Naive thymus-derived CD4-positive, alpha-beta T cell (primary cell): ENCODE measurements at regions of chr14 and their contacts with region 1.

Region 1: GRCh38 chr14:61475316-61475715 is 153.9 kb downstream of the PRKCH start:
- DNase-seq: peak in 2 of 9 donors; percentile 32 to 34
- ATAC-seq: no peak
- H3K4me3 ChIP-seq: no peak overlapping the region
- H3K4me3 Mint-ChIP-seq: peak overlapping the region in 8 of 10 donors; percentile 28 to 94 (median 48)
- H3K27ac ChIP-seq: peak overlapping the region; percentile 98
- H3K27ac Mint-ChIP-seq: peak overlapping the region in 8 of 9 donors; percentile 84 to 100 (median 96)
- H3K4me1 ChIP-seq: peaks cover 93 to 95% of the 10 kb centered on the region in 2 donors
- H3K4me1 Mint-ChIP-seq: peaks cover 55 to 98% (median 95%) of the 10 kb centered on the region in 7 donors
- H3K27me3 ChIP-seq: no peaks in the 10 kb centered on the region
- H3K27me3 Mint-ChIP-seq: no peaks in the 10 kb centered on the region

Region 2: GRCh38 chr14:59739794-59740193 is 1735.5 kb before region 1 on chr14:
- CTCF ChIA-PET with region 1: no interaction called
- POLR2A ChIA-PET with region 1: no interaction called
- intact Hi-C with region 1: no loop called
- DNase-seq: no peak
- ATAC-seq: peak; percentile 24
- H3K4me3 ChIP-seq: no peak overlapping the region
- H3K4me3 Mint-ChIP-seq: no peak overlapping the region
- H3K27ac ChIP-seq: no peak overlapping the region
- H3K27ac Mint-ChIP-seq: no peak overlapping the region
- H3K4me1 ChIP-seq: no peaks in the 10 kb centered on the region
- H3K4me1 Mint-ChIP-seq: no peaks in the 10 kb centered on the region
- H3K27me3 ChIP-seq: no peaks in the 10 kb centered on the region
- H3K27me3 Mint-ChIP-seq: peaks cover 0 to 18% (median 4%) of the 10 kb centered on the region in 5 donors

Region 3: DNA sequence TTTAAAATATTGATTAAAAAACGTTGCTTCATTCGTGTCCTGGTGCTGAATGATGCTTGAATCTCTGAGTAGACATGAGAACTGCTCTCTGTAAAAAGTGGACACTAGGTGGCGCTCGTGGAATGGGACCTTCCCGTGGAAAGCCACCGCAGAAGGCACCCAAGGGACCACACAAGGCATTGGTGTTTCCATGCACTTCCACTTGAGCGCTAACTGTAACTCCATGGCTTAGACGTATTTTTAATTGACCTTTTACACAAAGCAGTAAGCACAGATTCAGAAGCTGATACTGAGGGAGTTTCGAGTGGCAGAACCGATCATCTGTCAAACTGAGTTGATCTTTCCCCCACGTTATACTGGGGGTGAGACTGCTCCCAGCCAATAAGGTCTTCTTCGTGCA is 18.6 kb before region 1 on chr14:
- CTCF ChIA-PET with region 1: interaction called, 12 read pairs
- POLR2A ChIA-PET with region 1: interaction called, 5 read pairs
- intact Hi-C with region 1: loop called (anchors 1 kb)
- DNase-seq: peak; percentile 63 to 82 (median 77)
- ATAC-seq: peak; percentile 76
- H3K4me3 ChIP-seq: no peak overlapping the region
- H3K4me3 Mint-ChIP-seq: peak overlapping the region in 5 of 10 donors; percentile 5 to 80 (median 51)
- H3K27ac ChIP-seq: peak overlapping the region; percentile 32
- H3K27ac Mint-ChIP-seq: peak overlapping the region in 8 of 9 donors; percentile 70 to 92 (median 86)
- H3K4me1 ChIP-seq: peaks cover 53 to 59% of the 10 kb centered on the region in 2 donors
- H3K4me1 Mint-ChIP-seq: peaks cover 52 to 93% (median 89%) of the 10 kb centered on the region in 7 donors
- H3K27me3 ChIP-seq: no peaks in the 10 kb centered on the region
- H3K27me3 Mint-ChIP-seq: no peaks in the 10 kb centered on the region

Region 4: GRCh38 chr14:61503167-61503801 is 28.0 kb after region 1 on chr14:
- CTCF ChIA-PET with region 1: interaction called, 10 read pairs
- POLR2A ChIA-PET with region 1: interaction called, 9 read pairs
- intact Hi-C with region 1: loop called (anchors 1 kb)
- DNase-seq: peak in 8 of 9 donors; percentile 57 to 83 (median 67)
- ATAC-seq: peak; percentile 91
- H3K4me3 ChIP-seq: peak overlapping the region; percentile 25
- H3K4me3 Mint-ChIP-seq: peak overlapping the region; percentile 58 to 88 (median 80)
- H3K27ac ChIP-seq: peak overlapping the region; percentile 78
- H3K27ac Mint-ChIP-seq: peak overlapping the region in 6 of 9 donors; percentile 92 to 99 (median 97)
- H3K4me1 ChIP-seq: peaks cover 56 to 85% of the 10 kb centered on the region in 2 donors
- H3K4me1 Mint-ChIP-seq: peaks cover 78 to 100% (median 93%) of the 10 kb centered on the region in 7 donors
- H3K27me3 ChIP-seq: no peaks in the 10 kb centered on the region
- H3K27me3 Mint-ChIP-seq: no peaks in the 10 kb centered on the region

Region 5: DNA sequence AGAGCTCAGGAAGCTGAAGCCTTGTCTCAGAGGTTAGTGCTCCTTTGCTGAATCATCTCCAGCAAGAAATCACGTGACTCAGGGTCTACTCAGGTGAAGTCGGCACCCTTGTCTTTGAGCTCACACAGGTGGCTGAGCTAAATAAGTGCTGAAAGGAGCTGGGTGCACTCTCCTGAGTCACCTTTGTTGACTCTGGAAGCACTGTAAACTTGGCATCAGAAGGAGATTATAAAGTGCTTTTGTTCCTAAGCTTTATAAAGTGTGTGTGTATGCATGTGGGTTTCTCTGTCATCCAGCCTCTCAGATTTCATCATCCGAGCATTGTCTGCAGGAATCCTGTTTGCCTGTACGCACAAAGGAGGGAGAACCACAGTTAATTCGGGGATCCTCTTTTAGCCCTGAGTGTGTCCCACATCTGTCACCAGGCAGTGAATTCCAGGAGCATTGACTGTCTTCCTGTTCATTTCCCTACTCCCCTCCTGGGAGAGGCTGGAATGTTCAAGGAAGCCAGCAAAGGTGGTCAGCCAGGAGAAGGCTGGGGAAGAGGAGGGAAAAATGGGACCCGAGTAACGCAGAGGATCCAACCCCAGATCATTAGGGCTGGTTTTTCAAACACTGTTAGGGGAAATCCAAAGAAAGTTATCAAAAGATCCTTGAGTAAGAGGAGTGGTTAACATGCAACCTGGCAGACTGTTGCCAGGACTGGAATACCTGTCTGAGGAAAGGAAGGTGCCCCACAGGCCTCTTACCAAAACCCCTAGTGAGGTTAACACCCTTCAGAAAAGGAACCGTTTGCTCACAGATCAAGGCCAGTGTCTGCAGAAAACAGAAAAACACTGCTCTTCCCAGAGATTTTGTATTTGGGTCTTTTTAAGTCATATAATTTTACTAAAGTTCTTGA is 62.5 kb after region 1 on chr14:
- CTCF ChIA-PET with region 1: interaction called, 4 read pairs
- POLR2A ChIA-PET with region 1: interaction called, 3 read pairs
- intact Hi-C with region 1: loop called in 1 of 2 experiments (anchors 2 kb)
- DNase-seq: peak in 1 of 9 donors; percentile 29
- ATAC-seq: peak; percentile 24
- H3K4me3 ChIP-seq: no peak overlapping the region
- H3K4me3 Mint-ChIP-seq: peak overlapping the region in 1 of 10 donors; percentile 26
- H3K27ac ChIP-seq: peak overlapping the region; percentile 24
- H3K27ac Mint-ChIP-seq: peak overlapping the region; percentile 38 to 85 (median 66)
- H3K4me1 ChIP-seq: no peaks in the 10 kb centered on the region
- H3K4me1 Mint-ChIP-seq: peaks cover 15 to 74% (median 35%) of the 10 kb centered on the region in 7 donors
- H3K27me3 ChIP-seq: no peaks in the 10 kb centered on the region
- H3K27me3 Mint-ChIP-seq: no peaks in the 10 kb centered on the region

Region 6: GRCh38 chr14:61662437-61663311 is 187.4 kb after region 1 on chr14:
- CTCF ChIA-PET with region 1: no interaction called
- POLR2A ChIA-PET with region 1: interaction called, 9 read pairs
- intact Hi-C with region 1: loop called (anchors 1 to 2 kb)
- DNase-seq: peak in 8 of 9 donors; percentile 23 to 56 (median 46)
- ATAC-seq: peak; percentile 91
- H3K4me3 ChIP-seq: peak overlapping the region; percentile 26
- H3K4me3 Mint-ChIP-seq: peak overlapping the region; percentile 49 to 91 (median 79)
- H3K27ac ChIP-seq: peak overlapping the region; percentile 54
- H3K27ac Mint-ChIP-seq: peak overlapping the region; percentile 70 to 96 (median 89)
- H3K4me1 ChIP-seq: peaks cover 40 to 65% of the 10 kb centered on the region in 2 donors
- H3K4me1 Mint-ChIP-seq: peaks cover 45 to 68% (median 63%) of the 10 kb centered on the region in 7 donors
- H3K27me3 ChIP-seq: no peaks in the 10 kb centered on the region
- H3K27me3 Mint-ChIP-seq: no peaks in the 10 kb centered on the region

Region 7: DNA sequence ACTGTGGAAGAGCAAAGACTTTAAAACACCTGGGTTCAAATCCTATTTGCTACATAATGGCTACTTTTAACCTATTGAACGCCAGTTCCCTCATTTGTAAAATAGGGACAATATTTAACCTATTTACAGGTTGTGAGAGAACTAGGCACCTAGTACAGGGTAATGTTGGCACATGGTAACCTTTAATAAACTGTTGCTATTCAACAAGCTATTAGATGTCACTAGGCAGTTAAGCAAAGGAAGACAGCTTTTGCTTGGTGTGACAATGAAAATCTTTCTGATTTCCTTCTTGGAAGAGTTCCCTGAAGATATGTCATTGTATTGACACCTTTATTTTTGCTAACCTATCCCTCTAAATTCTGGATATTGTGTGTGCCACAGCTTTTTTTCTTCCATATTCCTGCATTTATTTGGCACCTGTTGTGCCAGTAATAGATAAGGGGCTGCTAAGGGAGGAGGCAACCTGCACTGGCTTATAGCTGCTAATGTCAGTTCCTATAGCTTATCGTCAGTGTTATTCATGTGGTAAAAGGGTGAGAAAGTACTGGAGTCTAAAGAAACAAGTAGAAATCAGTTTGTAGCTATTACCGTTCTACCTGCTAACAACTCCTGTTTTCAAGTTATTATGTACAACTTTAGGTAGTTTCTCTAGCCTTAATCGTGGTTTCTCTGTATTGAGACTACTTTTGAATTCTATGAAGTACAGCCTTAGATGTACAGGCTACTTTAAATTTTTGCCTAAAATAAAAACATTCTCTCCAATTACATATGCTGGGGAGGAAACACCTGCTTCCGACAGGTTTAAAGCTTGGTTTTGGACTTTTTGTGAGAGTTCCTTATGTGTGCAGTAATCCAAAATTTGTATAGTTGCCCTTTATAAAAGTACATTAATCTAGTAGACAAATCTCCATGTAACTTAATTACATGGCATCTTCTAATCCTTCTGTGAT is 244.3 kb after region 1 on chr14:
- CTCF ChIA-PET with region 1: interaction called, 5 read pairs
- POLR2A ChIA-PET with region 1: interaction called, 13 read pairs
- intact Hi-C with region 1: no loop called
- DNase-seq: peak in 7 of 9 donors; percentile 16 to 61 (median 36)
- ATAC-seq: peak; percentile 85
- H3K4me3 ChIP-seq: peak overlapping the region; percentile 6
- H3K4me3 Mint-ChIP-seq: peak overlapping the region; percentile 5 to 80 (median 72)
- H3K27ac ChIP-seq: peak overlapping the region; percentile 56
- H3K27ac Mint-ChIP-seq: peak overlapping the region; percentile 28 to 90 (median 80)
- H3K4me1 ChIP-seq: peaks cover 23 to 35% of the 10 kb centered on the region in 2 donors
- H3K4me1 Mint-ChIP-seq: peaks cover 33 to 91% (median 81%) of the 10 kb centered on the region in 7 donors
- H3K27me3 ChIP-seq: no peaks in the 10 kb centered on the region
- H3K27me3 Mint-ChIP-seq: no peaks in the 10 kb centered on the region

Region 8: GRCh38 chr14:61837336-61838229 is 362.3 kb after region 1 on chr14:
- CTCF ChIA-PET with region 1: interaction called, 8 read pairs
- POLR2A ChIA-PET with region 1: no interaction called
- intact Hi-C with region 1: loop called in 1 of 2 experiments (anchors 1 kb)
- DNase-seq: peak; percentile 49 to 76 (median 67)
- ATAC-seq: peak; percentile 98
- H3K4me3 ChIP-seq: no peak overlapping the region
- H3K4me3 Mint-ChIP-seq: no peak overlapping the region
- H3K27ac ChIP-seq: no peak overlapping the region
- H3K27ac Mint-ChIP-seq: no peak overlapping the region
- H3K4me1 ChIP-seq: no peaks in the 10 kb centered on the region
- H3K4me1 Mint-ChIP-seq: peaks cover 0 to 9% (median 0%) of the 10 kb centered on the region in 7 donors
- H3K27me3 ChIP-seq: no peaks in the 10 kb centered on the region
- H3K27me3 Mint-ChIP-seq: peaks cover 0 to 31% (median 0%) of the 10 kb centered on the region in 5 donors